ENCODE measurements at regions of chr5 and their contacts with region 1.

Region 1: DNA sequence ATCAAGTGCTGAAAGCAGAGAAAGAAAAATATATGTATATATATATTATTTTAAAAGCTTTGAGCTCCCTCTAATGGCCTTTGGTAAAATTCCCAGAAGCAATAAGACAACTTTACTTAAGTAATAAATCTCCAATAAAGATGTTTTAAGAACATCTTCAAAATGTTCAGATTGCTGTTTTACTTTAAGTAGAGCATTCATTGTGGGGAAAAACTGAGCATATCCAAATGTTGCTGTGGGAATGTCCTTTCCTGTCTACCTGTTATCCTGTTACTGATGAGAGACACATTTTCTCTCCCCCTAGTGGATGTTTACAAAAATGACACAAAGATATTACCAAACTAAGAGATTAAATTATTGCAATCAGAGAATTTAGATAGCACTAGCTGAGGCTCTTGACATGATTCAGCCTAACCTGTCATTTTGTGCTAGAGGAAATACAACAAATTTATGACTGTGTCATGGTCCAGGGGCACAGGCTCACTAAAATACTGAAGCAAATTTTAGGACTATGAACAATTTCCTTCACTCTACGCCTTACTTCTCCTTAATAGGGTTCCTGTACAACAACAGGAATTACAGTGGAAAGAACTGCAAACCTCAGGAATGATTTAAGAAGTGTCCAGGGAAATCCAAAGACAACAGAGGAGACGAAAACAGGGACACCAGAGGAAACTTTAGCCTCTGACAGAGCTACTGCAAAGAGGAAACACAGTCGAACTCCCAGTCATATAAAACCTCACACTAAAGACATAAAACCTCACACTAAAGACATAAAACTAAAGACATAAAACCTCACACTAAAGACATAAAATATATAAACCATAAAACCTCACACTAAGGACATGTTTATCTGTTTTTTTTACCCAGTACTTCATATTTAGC is 24.3 kb upstream of the PRRC1 start:
- DNase-seq: no peak
- ATAC-seq: peak; percentile 58
- H3K4me3 Mint-ChIP-seq: no peak overlapping the region
- H3K27ac Mint-ChIP-seq: no peak overlapping the region
- H3K4me1 Mint-ChIP-seq: no peaks in the 10 kb centered on the region
- H3K27me3 Mint-ChIP-seq: peaks cover 37% of the 10 kb centered on the region

Region 2: DNA sequence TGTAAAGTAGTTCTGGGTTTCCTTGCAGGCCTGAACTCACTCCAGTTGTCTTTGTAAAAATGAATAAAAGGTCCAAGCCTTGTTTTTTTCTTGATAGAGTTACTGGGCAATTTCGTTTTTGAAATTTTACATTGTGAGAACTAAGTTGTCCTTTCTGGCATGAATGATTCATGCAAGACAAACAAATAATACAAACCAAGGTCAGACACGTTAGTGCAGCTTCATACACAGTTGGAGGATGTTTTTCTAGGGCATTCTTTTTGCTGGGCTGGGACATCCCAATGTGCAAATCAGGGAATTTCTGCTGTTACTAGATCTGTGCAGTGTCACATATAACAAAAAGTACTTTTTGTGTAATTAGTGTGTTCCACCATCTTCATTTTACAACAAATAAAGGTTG is 106.5 kb before region 1 on chr5:
- CTCF ChIA-PET with region 1: no interaction called
- DNase-seq: no peak
- ATAC-seq: no peak
- H3K4me3 Mint-ChIP-seq: no peak overlapping the region
- H3K27ac Mint-ChIP-seq: no peak overlapping the region
- H3K4me1 Mint-ChIP-seq: no peaks in the 10 kb centered on the region
- H3K27me3 Mint-ChIP-seq: peaks cover 6% of the 10 kb centered on the region

Region 3: DNA sequence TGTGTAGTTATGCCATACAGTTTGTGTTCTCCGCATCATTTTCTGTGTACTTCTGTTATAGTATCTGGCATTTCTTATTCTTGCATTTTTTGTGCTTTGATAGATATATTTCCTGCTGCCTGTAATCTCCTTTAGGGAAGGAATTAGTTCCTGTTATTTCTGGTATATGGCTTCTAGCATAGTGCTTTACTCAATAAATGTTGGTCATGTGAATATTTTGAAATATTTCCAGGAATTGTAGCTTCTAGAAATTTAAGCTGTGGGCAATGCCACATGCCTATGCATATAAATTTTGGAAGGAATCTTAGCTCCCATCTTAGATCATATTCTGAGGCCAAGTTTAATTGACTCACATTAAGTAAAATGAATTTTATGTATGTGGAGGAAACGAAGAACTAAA is 12.8 kb after region 1 on chr5:
- CTCF ChIA-PET with region 1: interaction called, 19 read pairs
- DNase-seq: no peak
- ATAC-seq: no peak
- H3K4me3 Mint-ChIP-seq: no peak overlapping the region
- H3K27ac Mint-ChIP-seq: no peak overlapping the region
- H3K4me1 Mint-ChIP-seq: no peaks in the 10 kb centered on the region
- H3K27me3 Mint-ChIP-seq: peaks cover 30% of the 10 kb centered on the region

Measured in activated CD8-positive, alpha-beta memory T cell treated with anti-CD3 and anti-CD28 coated beads, Interleukin-2, amount 10 ng/mL, durations not matched to agents 7 days and 5 days (primary cell).